CD14-positive monocyte (primary cell): ENCODE measurements at regions of chr6 and their contacts with region 1.

Region 1: DNA sequence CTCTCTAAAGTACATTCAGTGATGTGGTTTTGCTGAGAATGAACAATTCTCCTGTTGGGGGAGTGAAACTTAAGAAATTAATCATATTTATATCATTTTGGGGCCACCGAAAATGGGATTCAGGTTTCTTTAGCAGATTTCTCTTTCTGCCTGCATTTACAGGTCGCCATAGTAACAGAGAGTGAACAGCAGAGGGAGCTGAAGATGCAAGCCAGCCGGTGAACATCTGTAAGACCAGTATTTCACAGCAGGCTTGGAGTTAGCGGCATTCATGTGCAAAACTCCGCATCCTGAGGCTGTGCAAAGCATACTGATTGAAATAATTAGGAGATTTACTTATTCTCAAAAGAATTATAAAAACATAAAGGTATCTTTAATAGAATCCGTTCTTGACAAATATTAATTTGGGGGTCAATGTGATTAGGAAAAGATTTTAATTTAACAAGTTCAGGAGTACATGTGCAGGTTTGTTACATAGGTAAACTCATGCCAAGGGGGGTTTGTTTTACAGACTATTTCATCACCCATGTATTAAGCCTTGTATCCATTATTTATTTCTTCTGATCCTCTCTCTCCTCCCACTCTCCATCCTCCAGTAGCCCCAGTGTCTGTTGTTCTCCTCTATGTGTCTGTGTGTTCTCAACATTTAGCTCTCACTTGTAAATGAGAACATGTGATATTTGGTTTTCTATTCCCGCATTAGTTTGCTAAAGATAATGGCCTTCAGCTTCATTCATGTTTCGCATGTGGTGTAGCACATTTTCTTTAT is 17.8 kb upstream of the HSF2 start:
- DNase-seq: peak; percentile 19 to 47 (median 41)
- H3K4me3 ChIP-seq: no peak overlapping the region
- H3K4me3 Mint-ChIP-seq: peak overlapping the region in 1 of 2 donors; percentile 26
- H3K27ac ChIP-seq: no peak overlapping the region
- H3K27ac Mint-ChIP-seq: no peak overlapping the region
- H3K4me1 ChIP-seq: no peaks in the 10 kb centered on the region
- H3K4me1 Mint-ChIP-seq: peaks cover under 1% of the 10 kb centered on the region
- H3K27me3 ChIP-seq: no peaks in the 10 kb centered on the region
- H3K27me3 Mint-ChIP-seq: peaks cover 2 to 9% (median 5%) of the 10 kb centered on the region in 3 donors
- CTCF ChIP-seq: peak; percentile 75

Region 2: DNA sequence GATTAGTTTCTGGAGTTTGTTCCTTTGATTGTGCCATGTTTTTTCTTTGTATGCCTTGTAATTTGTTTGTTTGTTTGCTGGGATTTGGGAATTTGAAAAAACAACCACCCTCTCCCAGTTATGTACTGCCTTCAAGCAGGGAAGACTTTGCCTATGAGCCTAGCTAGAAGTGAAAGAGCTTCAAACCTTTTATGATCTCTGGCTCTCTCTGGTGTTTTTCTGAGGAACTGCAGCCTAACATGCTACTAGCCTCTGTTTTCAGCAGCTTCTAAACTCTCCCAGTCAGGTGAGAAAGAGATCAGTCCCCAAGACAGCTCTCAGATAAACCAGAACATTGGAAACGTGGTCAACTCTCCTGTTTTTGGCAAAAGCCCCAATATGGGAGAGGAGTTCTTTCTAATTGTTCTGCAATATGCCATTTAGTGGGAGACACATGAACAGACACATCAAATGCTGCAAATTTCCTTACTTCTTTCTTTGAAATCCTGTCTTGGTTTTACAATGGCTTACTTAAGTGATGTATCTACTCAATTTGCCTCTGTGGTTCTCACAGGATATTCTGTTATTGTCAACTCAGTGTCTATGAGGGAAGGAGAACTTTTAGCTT is 148.9 kb after region 1 on chr6:
- intact Hi-C with region 1: loop called in 1 of 2 experiments (anchors 5 kb)
- DNase-seq: peak; percentile 19 to 56 (median 45)
- H3K4me3 ChIP-seq: no peak overlapping the region
- H3K4me3 Mint-ChIP-seq: no peak overlapping the region
- H3K27ac ChIP-seq: no peak overlapping the region
- H3K27ac Mint-ChIP-seq: no peak overlapping the region
- H3K4me1 ChIP-seq: no peaks in the 10 kb centered on the region
- H3K4me1 Mint-ChIP-seq: no peaks in the 10 kb centered on the region
- H3K27me3 ChIP-seq: no peaks in the 10 kb centered on the region
- H3K27me3 Mint-ChIP-seq: peaks cover 0 to 8% (median 6%) of the 10 kb centered on the region in 3 donors
- CTCF ChIP-seq: peak; percentile 77